Panc1 (cell line): ENCODE measurements at regions of chr3 and their contacts with region 1.

Region 1: GRCh38 chr3:180825964-180826363 is 86.5 kb upstream of the FXR1 start:
- DNase-seq: no peak
- ATAC-seq: no peak
- H3K4me3 ChIP-seq: no peak overlapping the region
- H3K27ac ChIP-seq: no peak overlapping the region
- H3K4me1 ChIP-seq: no peaks in the 10 kb centered on the region
- H3K27me3 ChIP-seq: peaks cover under 1% of the 10 kb centered on the region; the same call in 1 of the 2 replicates
- CTCF ChIP-seq: no peak

Region 2: GRCh38 chr3:180163719-180164118 is 662.2 kb before region 1 on chr3:
- CTCF ChIA-PET with region 1: no interaction called
- POLR2A ChIA-PET with region 1: no interaction called
- in situ Hi-C with region 1: no loop called
- intact Hi-C with region 1: no loop called
- DNase-seq: no peak
- ATAC-seq: no peak
- H3K4me3 ChIP-seq: no peak overlapping the region
- H3K27ac ChIP-seq: no peak overlapping the region
- H3K4me1 ChIP-seq: no peaks in the 10 kb centered on the region
- H3K27me3 ChIP-seq: no peaks in the 10 kb centered on the region
- CTCF ChIP-seq: no peak

Region 3: DNA sequence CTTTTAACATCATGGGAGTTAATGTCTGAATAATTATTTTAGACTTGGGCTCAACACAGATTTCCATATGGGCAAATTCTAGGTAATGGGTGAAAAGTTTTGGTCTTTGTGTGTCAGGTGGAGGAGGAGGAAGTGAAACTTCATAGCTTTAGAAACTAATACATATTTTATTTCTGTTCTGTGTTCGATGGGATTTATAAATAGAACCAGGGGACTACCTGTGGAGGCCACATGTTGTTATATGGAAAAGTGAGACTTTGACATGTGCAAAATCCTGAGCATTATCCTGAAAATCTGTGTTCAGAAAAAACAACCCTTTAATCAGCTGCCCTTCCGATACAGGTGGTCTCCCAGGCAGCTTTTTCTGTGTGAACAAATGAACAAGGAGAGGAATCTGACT is 1095.3 kb after region 1 on chr3:
- CTCF ChIA-PET with region 1: no interaction called
- POLR2A ChIA-PET with region 1: interaction called, 11 read pairs
- in situ Hi-C with region 1: no loop called
- intact Hi-C with region 1: no loop called
- DNase-seq: no peak
- ATAC-seq: no peak
- H3K4me3 ChIP-seq: no peak overlapping the region
- H3K27ac ChIP-seq: no peak overlapping the region
- H3K4me1 ChIP-seq: no peaks in the 10 kb centered on the region
- H3K27me3 ChIP-seq: no peaks in the 10 kb centered on the region
- CTCF ChIP-seq: no peak